Mammary epithelial cell (primary cell): ENCODE measurements at regions of chr1 and their contacts with region 1.

Region 1: GRCh38 chr1:241998412-241998921 is 431 bp downstream of the MAP1LC3C start:
- DNase-seq: peak; percentile 78
- H3K4me3 ChIP-seq: no peak overlapping the region
- H3K27ac ChIP-seq: no peak overlapping the region
- H3K4me1 ChIP-seq: peaks cover 3% of the 10 kb centered on the region
- H3K27me3 ChIP-seq: no peaks in the 10 kb centered on the region
- CTCF ChIP-seq: peak in 1 of 2 donors; percentile 48

Region 2: DNA sequence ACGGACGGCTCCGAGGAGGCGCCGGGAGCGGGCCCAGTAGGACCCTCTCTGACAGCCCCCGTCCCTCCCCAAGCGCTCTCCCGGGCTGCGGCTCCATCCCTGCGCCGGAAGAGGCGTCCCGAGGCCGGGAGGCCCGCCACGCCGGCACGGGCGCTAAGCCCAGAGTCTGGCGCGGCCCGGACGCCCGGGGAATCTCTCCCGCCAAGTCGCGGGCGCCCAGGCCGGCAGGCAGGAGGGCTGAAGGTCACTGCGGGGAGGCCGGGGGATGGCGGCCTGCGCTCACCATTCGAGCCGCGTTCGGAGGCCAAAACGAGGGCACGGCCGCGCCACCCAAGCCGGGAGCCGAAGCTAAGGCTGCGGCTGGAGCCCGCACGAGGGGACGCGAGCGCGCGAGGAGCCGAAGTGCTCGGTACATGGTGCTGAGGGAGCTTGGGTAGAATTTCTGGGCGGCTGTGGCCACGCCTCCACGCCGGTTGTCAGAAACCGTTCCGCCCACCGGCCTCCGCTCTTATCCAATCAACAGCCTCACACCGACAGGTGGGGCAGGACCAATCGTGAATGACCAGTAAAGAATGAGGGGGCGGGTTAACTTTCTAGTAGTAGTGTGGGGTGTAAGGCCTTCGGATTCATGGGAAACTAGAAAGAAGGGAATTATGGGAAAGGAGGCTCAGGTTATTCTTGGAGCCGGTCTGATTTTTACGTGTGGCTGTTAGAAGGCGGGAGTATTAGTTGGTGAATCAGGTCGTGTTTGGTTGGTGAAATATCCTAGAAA is 479.0 kb before region 1 on chr1 and contains the start of gene FH:
- CTCF ChIA-PET with region 1: no interaction called
- dilution Hi-C with region 1: no loop called
- in situ Hi-C with region 1: loop called in 1 of 2 experiments (anchors 10 kb)
- intact Hi-C with region 1: no loop called
- DNase-seq: peak; percentile 99
- H3K4me3 ChIP-seq: peak within 1 kb of the TSS; percentile 72 to 98 (median 92)
- H3K27ac ChIP-seq: peak within 1 kb of the TSS; percentile 82
- H3K4me1 ChIP-seq: no peaks in the 10 kb centered on the region
- H3K27me3 ChIP-seq: no peaks in the 10 kb centered on the region
- CTCF ChIP-seq: no peak
- total RNA-seq, gene FH: 89.9 to 95.8 TPM